OCI-LY7 (cell line): ENCODE measurements at regions of chr19 and their contacts with region 1.

Region 1: DNA sequence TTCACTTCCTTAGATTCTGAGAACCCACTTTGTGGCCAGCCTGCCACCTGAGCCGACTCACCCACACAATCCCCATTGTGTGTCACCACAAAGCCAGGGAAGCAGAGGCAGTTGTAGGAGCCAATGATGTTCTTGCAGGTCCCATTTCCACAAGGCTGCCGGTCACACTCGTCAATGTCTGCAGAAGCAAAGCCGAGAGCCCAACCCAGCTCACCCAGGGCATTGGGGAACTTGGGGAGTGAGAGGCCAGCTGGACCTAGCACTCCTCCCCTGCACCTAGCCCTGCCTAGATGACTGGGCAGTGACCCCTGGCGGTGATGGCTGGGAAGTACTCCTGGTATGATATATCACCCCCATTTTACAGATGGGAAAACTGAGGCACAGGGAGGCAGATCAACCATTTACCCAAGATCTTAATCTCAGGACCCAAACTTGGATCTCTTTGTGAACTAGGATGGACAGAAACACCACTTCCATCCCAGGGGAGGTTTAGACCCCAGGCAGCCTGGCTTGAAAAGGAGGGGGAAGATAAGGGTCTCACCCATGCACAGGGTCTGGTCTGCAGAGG is 43.4 kb downstream of the CCL25 start:
- DNase-seq: peak; percentile 8
- H3K4me3 ChIP-seq: no peak overlapping the region
- H3K27ac ChIP-seq: no peak overlapping the region
- H3K4me1 ChIP-seq: no peaks in the 10 kb centered on the region
- CTCF ChIP-seq: peak; percentile 64; the same call in 1 of the 2 replicates

Region 2: GRCh38 chr19:8017808-8018207 is 78.2 kb before region 1 on chr19:
- CTCF ChIA-PET with region 1: no interaction called
- POLR2A ChIA-PET with region 1: no interaction called
- intact Hi-C with region 1: loop called (anchors 10 kb)
- DNase-seq: peak; percentile 76
- H3K4me3 ChIP-seq: no peak overlapping the region
- H3K27ac ChIP-seq: no peak overlapping the region
- H3K4me1 ChIP-seq: peaks cover 4% of the 10 kb centered on the region
- CTCF ChIP-seq: peak; percentile 84

Region 3: DNA sequence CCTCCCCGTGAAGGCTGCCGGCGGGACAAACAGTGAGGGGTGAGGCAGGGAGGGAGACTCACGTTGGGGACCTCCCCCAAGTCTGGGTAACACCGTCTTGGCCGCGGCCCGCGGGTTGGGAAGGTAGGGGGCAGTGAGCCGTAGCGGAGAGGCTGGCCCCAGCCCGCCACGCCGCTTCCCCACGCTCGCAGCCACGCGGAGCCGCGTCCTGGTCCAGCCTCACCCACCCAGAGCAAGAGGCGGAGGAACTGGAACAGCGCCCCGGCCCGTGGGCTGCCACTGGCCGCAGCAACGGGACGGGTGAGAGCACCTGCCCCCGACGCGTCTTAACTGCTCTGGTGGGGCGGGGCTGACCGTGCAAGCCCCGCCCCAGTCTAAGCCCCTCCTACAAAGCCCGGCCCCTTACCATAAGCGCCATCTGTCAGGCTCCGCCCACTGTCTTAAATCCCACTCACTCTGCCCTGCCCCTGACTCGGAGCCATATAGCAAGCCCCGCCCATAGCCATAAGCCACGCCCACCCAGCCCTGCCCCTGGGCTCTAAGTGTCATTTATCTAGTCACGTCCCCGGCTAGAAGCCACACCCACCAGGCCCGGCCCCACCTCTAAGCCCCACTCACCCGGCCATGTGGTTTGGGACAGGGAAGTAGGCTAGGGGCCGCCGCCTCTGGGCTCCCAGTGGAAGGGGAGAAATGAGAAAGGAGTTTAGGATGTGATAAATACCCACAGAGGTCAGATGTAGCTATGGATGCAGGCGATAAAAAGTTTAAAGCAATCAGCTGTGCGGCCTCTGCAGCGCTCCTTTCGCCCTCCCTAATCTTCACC is 45.5 kb before region 1 on chr19:
- CTCF ChIA-PET with region 1: no interaction called
- POLR2A ChIA-PET with region 1: no interaction called
- intact Hi-C with region 1: no loop called
- DNase-seq: peak; percentile 98
- H3K4me3 ChIP-seq: peak overlapping the region; percentile 57
- H3K27ac ChIP-seq: no peak overlapping the region
- H3K4me1 ChIP-seq: peaks cover 25% of the 10 kb centered on the region
- CTCF ChIP-seq: no peak

Region 4: DNA sequence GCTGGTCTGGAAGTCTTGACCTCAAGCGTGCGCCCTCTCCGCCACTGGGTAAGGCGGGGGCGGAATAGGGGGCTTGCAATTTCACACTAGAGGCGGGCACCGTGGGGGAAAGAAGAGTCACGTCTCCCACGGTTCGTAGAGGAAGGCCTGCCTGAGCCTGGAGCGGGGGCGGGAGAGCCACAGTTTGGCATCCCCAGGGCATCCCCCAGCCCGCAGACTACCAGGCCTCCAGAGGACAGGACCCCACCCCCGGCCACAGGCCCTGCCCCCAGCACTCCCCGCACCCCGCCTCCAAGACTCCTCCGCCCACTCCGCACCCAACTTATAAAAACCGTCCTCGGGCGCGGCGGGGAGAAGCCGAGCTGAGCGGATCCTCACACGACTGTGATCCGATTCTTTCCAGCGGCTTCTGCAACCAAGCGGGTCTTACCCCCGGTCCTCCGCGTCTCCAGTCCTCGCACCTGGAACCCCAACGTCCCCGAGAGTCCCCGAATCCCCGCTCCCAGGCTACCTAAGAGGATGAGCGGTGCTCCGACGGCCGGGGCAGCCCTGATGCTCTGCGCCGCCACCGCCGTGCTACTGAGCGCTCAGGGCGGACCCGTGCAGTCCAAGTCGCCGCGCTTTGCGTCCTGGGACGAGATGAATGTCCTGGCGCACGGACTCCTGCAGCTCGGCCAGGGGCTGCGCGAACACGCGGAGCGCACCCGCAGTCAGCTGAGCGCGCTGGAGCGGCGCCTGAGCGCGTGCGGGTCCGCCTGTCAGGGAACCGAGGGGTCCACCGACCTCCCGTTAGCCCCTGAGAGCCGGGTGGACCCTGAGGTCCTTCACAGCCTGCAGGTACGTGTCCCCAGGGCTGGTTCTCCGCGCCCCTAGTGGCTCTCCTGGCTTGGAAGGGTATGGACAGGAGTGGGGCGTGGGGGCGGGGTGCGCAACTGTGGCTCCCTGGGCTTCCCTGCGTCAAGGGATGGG is 268.1 kb after region 1 on chr19 and contains the start of gene ANGPTL4:
- CTCF ChIA-PET with region 1: no interaction called
- POLR2A ChIA-PET with region 1: no interaction called
- intact Hi-C with region 1: no loop called
- DNase-seq: no peak
- H3K4me3 ChIP-seq: no peak within 1 kb of the TSS
- H3K27ac ChIP-seq: no peak within 1 kb of the TSS
- H3K4me1 ChIP-seq: no peaks in the 10 kb centered on the region
- CTCF ChIP-seq: no peak
- total RNA-seq, gene ANGPTL4: not detected in 2 replicates